Posterior vena cava (tissue), 2 donors: ENCODE measurements at regions of chr13 and their contacts with region 1.

Region 1: GRCh38 chr13:28426381-28426780 is 68.5 kb downstream of the FLT1 start:
- DNase-seq: no peak

Region 2: DNA sequence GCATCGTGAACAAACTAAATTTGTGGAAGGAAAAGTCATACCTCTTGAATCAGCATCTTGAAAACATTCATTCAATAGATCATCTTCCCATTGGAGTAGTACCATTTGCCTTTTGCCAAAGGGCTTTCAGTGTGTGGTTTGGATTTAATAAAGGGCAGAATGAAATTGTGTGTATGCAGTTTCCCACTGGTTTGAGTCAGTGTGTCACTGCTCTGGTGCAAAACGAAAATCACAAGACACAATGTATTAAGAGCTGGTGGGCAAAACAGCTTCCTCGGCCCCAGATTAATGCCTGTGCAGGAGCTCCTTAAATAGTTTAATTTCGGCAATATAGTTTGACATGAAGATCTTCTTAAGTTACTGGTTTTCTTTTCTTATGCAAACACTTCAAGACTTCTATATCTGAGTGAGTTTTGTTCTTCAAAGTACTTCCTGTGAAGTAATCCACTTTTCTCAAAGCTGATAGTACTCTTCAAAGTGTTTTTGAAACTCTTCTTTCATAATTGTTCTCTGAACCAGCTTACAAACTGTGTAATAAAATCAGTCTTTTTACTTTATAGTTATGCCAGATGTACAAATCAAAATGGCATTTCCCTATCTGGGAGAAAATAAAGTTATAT is 1123.6 kb before region 1 on chr13:
- intact Hi-C with region 1: no loop called
- DNase-seq: no peak

Region 3: GRCh38 chr13:28463481-28463880 is 37.1 kb after region 1 on chr13:
- intact Hi-C with region 1: loop called in 1 of 2 experiments (anchors 2 kb)
- DNase-seq: no peak